GM12878 (cell line): ENCODE measurements at regions of chr7 and their contacts with region 1.

Region 1: GRCh38 chr7:116236020-116236630 is 25.8 kb downstream of the TES start:
- DNase-seq: no peak
- ATAC-seq: peak; percentile 85
- H3K4me3 ChIP-seq: no peak overlapping the region
- H3K27ac ChIP-seq: no peak overlapping the region
- H3K4me1 ChIP-seq: no peaks in the 10 kb centered on the region
- H3K27me3 ChIP-seq: no peaks in the 10 kb centered on the region
- CTCF ChIP-seq: peak; percentile 28 to 66 (median 46); a peak in 5 of 6 replicates
- EP300 ChIP-seq: no peak
- POLR2A ChIP-seq: no peak
- RAD21 ChIP-seq: peak; percentile 76

Region 2: DNA sequence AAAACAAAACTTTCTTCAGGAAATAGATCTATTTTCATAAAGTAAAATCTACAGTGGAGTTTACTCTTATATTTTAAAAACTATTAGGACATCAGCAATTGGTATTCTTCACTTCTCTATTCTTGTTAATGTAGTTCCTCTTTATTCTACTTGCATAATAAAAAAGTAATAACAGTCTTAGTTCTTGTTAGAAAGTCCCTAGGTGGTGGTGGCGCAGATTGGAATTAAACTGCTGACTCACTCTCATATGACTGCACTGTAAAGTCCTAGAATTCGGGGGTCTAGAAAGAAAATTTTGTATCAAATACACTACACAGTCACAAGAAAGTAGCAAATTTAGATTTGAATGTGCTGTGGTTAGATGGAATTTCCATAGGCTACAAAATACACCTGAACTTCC is 70.4 kb before region 1 on chr7:
- CTCF ChIA-PET with region 1: interaction called, 85 read pairs
- POLR2A ChIA-PET with region 1: no interaction called
- RAD21 ChIA-PET with region 1: interaction called, 14 read pairs
- SMC1A ChIA-PET with region 1: interaction called, 14 read pairs
- in situ Hi-C with region 1: no loop called
- intact Hi-C with region 1: no loop called
- DNase-seq: no peak
- ATAC-seq: peak; percentile 83
- H3K4me3 ChIP-seq: no peak overlapping the region
- H3K27ac ChIP-seq: peak overlapping the region; percentile 38
- H3K4me1 ChIP-seq: peaks cover 46% of the 10 kb centered on the region
- H3K27me3 ChIP-seq: no peaks in the 10 kb centered on the region
- CTCF ChIP-seq: no peak
- EP300 ChIP-seq: peak; percentile 34 to 71; a peak in 2 of 4 replicates
- POLR2A ChIP-seq: no peak
- RAD21 ChIP-seq: no peak

Region 3: GRCh38 chr7:116180302-116180701 is 55.8 kb before region 1 on chr7:
- CTCF ChIA-PET with region 1: interaction called, 176 read pairs
- POLR2A ChIA-PET with region 1: no interaction called
- RAD21 ChIA-PET with region 1: interaction called, 91 read pairs
- SMC1A ChIA-PET with region 1: interaction called, 188 read pairs
- in situ Hi-C with region 1: loop called (anchors 5 kb)
- intact Hi-C with region 1: loop called (anchors 1 kb)
- DNase-seq: no peak
- ATAC-seq: peak; percentile 88
- H3K4me3 ChIP-seq: no peak overlapping the region
- H3K27ac ChIP-seq: no peak overlapping the region
- H3K4me1 ChIP-seq: no peaks in the 10 kb centered on the region
- H3K27me3 ChIP-seq: no peaks in the 10 kb centered on the region
- CTCF ChIP-seq: peak; percentile 62 to 79 (median 70)
- EP300 ChIP-seq: no peak
- POLR2A ChIP-seq: no peak
- RAD21 ChIP-seq: peak; percentile 85

Region 4: GRCh38 chr7:116197360-116197759 is 38.8 kb before region 1 on chr7:
- CTCF ChIA-PET with region 1: interaction called, 30 read pairs
- POLR2A ChIA-PET with region 1: no interaction called
- RAD21 ChIA-PET with region 1: interaction called, 6 read pairs
- SMC1A ChIA-PET with region 1: interaction called, 13 read pairs
- in situ Hi-C with region 1: no loop called
- intact Hi-C with region 1: no loop called
- DNase-seq: no peak
- ATAC-seq: no peak
- H3K4me3 ChIP-seq: no peak overlapping the region
- H3K27ac ChIP-seq: no peak overlapping the region
- H3K4me1 ChIP-seq: no peaks in the 10 kb centered on the region
- H3K27me3 ChIP-seq: no peaks in the 10 kb centered on the region; a peak in 1 of 4 replicates
- CTCF ChIP-seq: no peak
- EP300 ChIP-seq: no peak
- POLR2A ChIP-seq: no peak
- RAD21 ChIP-seq: no peak

Region 5: DNA sequence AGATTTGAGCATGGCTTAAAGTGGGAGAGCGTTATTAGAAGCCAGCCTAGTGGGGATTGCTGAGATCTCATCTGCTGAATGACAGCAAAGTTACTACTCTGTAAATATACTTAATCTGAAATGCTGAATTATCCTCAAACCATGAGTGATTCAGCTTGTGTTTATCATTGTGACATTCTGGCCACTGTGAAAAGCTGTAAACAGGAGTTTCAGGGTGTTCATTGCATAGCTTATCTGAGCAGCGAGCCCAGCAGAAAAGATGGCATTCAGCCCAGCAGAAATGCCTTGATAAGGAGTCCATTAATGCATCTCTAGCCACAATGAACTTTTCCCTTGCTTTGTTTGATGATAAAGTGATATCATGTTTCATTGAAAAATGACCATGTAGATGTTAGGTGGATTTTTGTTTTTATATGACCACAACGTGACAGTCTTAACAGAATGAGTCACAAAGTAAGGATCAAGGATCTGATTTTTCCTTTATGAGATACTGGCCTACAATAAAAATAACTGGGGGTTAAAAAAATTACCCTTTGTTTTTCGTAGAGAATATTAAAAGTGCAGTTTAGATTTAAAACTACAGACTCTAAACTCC is 18.0 kb before region 1 on chr7:
- CTCF ChIA-PET with region 1: interaction called, 12 read pairs
- POLR2A ChIA-PET with region 1: interaction called, 3 read pairs
- RAD21 ChIA-PET with region 1: interaction called, 5 read pairs
- SMC1A ChIA-PET with region 1: interaction called, 72 read pairs
- in situ Hi-C with region 1: no loop called
- intact Hi-C with region 1: no loop called
- DNase-seq: no peak
- ATAC-seq: no peak; the same call in 2 of the 3 replicates
- H3K4me3 ChIP-seq: no peak overlapping the region
- H3K27ac ChIP-seq: no peak overlapping the region
- H3K4me1 ChIP-seq: peaks cover 25% of the 10 kb centered on the region
- H3K27me3 ChIP-seq: no peaks in the 10 kb centered on the region
- CTCF ChIP-seq: no peak
- EP300 ChIP-seq: no peak
- POLR2A ChIP-seq: no peak
- RAD21 ChIP-seq: no peak

Region 6: GRCh38 chr7:116249708-116250553 is 13.8 kb after region 1 on chr7:
- CTCF ChIA-PET with region 1: interaction called, 15 read pairs
- POLR2A ChIA-PET with region 1: no interaction called
- RAD21 ChIA-PET with region 1: interaction called, 4 read pairs
- SMC1A ChIA-PET with region 1: interaction called, 6 read pairs
- in situ Hi-C with region 1: no loop called
- intact Hi-C with region 1: no loop called
- DNase-seq: no peak
- ATAC-seq: peak; percentile 79
- H3K4me3 ChIP-seq: no peak overlapping the region
- H3K27ac ChIP-seq: no peak overlapping the region
- H3K4me1 ChIP-seq: no peaks in the 10 kb centered on the region
- H3K27me3 ChIP-seq: no peaks in the 10 kb centered on the region
- CTCF ChIP-seq: peak; percentile 18 to 45 (median 38)
- EP300 ChIP-seq: no peak
- POLR2A ChIP-seq: no peak
- RAD21 ChIP-seq: peak; percentile 35

Region 7: DNA sequence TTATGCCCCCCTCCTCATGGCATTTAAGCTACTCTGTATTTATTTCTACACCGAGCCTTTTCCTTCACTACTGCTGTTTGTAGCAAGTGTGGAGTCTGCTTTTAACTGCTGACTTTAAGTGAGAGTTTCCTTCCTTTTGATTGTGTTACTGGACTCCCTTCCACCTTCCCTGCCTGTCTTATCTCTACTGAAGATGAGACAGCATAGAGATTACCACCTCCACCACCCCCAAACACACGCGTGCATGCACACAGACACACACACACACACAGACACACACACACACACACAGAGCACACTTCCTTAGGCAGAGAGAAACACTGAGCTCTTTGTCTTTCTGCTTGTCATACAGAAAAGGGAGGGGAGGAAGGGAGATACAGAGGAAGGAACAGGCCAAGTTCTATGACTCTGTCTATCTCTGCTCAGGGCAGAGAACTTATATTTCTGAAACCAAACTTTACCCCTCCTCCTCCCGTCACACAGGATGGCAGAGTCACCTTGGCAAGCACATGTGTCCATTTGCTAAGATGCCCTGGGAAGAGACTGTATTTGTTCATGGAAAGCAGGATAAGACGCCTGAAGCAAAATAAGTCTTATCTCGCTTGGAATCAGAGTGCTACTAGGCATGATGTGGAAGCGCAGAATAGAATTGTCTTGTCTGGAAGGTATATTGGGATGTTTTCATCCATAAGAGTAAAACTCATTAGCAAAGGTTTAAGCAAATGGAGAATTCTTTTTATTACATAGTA is 181.6 kb after region 1 on chr7:
- CTCF ChIA-PET with region 1: no interaction called
- POLR2A ChIA-PET with region 1: no interaction called
- RAD21 ChIA-PET with region 1: no interaction called
- SMC1A ChIA-PET with region 1: no interaction called
- in situ Hi-C with region 1: no loop called
- intact Hi-C with region 1: no loop called
- DNase-seq: no peak
- ATAC-seq: no peak
- H3K4me3 ChIP-seq: no peak overlapping the region
- H3K27ac ChIP-seq: no peak overlapping the region
- H3K4me1 ChIP-seq: no peaks in the 10 kb centered on the region
- H3K27me3 ChIP-seq: peaks cover 0 to 3% of the 10 kb centered on the region in 2 experiments; a peak in 1 of 4 replicates
- CTCF ChIP-seq: no peak
- EP300 ChIP-seq: no peak
- POLR2A ChIP-seq: no peak
- RAD21 ChIP-seq: no peak